PC-9 (cell line): ENCODE measurements at regions of chr5 and their contacts with region 1.

Region 1: DNA sequence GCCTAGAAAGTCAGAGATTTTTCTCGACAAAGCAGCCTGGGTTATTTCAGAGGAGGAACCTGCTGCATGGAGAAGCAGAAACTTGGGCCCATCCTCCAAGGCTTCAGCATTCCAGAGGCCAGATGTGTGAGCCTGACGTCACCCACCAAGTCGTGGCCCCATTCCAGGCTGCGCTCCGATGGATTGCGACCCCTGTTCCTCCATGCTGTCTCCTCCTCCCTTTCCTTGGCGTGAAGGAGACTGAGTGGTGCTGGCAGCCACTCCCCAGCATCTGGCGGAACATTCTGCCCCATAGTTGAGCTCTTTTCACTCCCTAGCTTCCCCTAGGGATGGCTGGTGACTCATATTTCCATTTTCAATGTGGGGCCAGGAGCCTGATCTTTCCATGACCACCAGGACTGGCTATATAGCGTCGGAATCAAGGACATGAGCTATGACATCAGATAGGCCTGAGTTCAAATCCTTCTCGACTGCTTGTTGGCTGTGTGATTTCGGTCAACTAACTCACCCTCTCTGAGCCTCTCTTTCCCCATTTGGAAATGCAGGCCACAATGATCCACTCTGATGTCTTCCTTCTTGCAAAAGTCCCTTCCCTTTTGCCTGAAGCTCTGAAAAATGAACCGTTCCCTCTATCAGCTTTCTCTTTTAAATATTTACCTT is 24.5 kb upstream of the DUSP1 start:
- DNase-seq: no peak
- H3K4me3 ChIP-seq: no peak overlapping the region
- H3K27ac ChIP-seq: no peak overlapping the region
- H3K4me1 ChIP-seq: peaks cover 46% of the 10 kb centered on the region
- H3K27me3 ChIP-seq: no peaks in the 10 kb centered on the region
- CTCF ChIP-seq: no peak

Region 2: DNA sequence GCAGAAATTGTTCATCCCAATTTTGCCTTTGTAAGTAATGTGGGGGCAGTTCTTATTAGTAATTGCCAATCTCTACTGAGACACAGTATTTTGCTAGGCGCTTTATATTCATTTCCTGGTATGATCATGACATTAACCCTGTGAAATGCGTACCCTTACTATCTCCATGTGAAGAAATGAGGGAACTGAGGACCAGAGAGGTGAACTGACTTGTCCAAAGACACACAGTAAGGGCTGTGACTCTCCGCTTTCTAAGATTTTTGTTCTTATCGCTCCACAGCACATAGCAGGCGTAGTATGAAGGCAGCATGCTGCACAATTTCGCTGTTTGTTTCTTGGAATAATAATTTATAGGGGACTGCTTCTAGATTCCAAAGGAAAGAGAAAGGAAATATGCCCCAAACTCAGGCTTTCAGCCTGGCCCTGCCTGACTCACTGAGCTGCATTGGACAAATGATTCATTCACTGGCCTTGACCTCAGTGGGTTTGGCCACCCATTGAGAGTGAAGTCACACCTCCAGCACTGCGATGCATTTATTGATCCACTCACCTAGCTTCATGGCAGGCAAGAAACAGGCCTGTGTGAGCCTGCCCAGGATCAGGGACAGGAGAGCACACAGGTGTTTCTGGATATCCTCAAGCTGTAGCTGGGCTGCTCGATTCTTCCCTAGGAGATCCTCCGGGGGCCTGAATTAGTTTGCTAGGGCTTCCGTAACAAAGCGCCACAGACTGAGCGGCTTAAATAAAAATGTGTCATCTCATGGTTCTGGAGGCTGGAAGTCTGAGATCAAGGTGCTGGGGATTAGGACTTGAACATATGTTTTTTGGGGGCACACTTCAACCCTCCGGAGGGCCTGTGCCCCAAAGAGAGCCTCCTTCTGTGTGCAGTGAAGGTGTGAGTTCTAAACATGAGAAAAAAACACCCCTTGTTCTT is 17.3 kb before region 1 on chr5:
- CTCF ChIA-PET with region 1: no interaction called
- POLR2A ChIA-PET with region 1: no interaction called
- intact Hi-C with region 1: loop called (anchors 1 kb)
- DNase-seq: peak; percentile 59 to 95
- H3K4me3 ChIP-seq: peak overlapping the region; percentile 39; the same call in 1 of the 2 replicates
- H3K27ac ChIP-seq: peak overlapping the region; percentile 100
- H3K4me1 ChIP-seq: peaks cover 74% of the 10 kb centered on the region
- H3K27me3 ChIP-seq: no peaks in the 10 kb centered on the region
- CTCF ChIP-seq: no peak